HEK293 (cell line): ENCODE measurements at regions of chr7 and their contacts with region 1.

Region 1: GRCh38 chr7:39580149-39580874 is 14.1 kb downstream of the YAE1 start:
- H3K4me3 ChIP-seq: no peak overlapping the region
- H3K27ac ChIP-seq: no peak overlapping the region
- H3K4me1 ChIP-seq: peaks cover 3% of the 10 kb centered on the region; the same call in 1 of the 2 replicates
- CTCF ChIP-seq: peak; percentile 62

Region 2: GRCh38 chr7:39566023-39566921 is 14.0 kb before region 1 on chr7 and contains the start of gene YAE1:
- CTCF ChIA-PET with region 1: interaction called, 12 read pairs
- POLR2A ChIA-PET with region 1: interaction called, 5 read pairs
- H3K4me3 ChIP-seq: peak within 1 kb of the TSS; percentile 100
- H3K27ac ChIP-seq: peak within 1 kb of the TSS; percentile 83
- H3K4me1 ChIP-seq: no peaks in the 10 kb centered on the region
- CTCF ChIP-seq: no peak

Region 3: DNA sequence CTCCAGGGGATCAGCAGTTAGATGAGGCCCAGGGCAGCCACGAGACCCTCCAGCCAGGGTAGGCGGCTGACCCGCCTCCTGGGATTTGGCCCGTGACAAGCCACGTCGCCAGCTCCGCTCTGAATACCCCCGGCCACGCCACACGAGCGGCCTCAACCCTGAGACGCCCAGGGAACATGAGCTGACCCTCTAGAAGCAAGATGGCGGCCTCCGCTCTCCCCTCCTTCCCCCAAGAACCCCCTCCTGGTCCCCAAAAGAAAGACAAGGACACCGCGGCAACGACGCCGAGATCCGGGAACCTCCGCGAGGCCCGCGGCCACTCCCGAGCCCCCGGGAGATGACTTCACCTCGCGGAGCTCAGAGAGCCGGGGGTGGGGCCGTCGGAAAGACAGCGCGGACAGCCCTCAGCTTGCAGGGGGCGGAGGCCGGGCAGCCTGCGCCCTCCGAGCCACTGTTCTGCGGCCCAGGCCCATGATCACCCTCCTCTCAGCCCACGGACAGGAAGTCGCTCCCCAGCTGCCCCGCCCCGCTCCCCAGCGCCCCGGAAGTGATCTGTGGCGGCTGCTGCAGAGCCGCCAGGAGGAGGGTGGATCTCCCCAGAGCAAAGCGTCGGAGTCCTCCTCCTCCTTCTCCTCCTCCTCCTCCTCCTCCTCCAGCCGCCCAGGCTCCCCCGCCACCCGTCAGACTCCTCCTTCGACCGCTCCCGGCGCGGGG is 42.9 kb after region 1 on chr7 and contains the start of gene RALA:
- CTCF ChIA-PET with region 1: interaction called, 9 read pairs
- POLR2A ChIA-PET with region 1: interaction called, 12 read pairs
- H3K4me3 ChIP-seq: peak within 1 kb of the TSS; percentile 86
- H3K27ac ChIP-seq: peak within 1 kb of the TSS; percentile 78
- H3K4me1 ChIP-seq: peaks cover 21% of the 10 kb centered on the region
- CTCF ChIP-seq: no peak

Region 4: DNA sequence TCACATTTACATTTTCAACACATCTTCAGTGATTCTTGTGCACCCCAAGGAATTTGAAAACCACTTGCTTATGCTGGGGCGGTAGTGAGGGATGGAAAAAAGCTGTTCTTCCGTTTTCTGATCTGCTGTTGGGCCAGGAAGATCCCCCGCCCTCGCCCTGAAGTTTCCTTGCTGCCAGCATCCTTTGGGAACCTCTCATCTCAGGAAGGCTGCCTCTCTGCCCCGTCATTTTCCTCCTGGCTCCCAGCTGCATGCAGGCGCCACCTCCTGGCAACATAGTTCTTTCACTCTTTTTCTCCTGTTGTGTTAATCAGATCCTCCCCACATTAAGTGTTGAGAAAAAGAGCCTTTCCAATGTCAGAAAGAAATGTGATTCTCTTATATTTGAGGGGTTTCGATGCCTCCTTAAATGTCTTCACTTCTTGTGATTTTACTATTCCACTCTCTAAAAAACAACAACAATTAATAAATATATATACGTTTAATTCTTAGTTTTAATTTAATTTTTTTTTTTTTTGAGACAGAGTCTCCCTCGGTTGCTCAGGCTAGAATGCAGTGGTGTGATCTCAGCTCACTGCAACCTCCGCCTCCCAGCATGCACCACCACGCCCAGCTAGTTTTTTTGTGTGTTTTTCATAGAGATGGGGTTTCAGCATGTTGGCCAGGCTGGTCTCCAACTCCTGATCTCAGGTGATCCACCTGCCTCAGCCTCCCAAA is 165.9 kb after region 1 on chr7:
- CTCF ChIA-PET with region 1: interaction called, 257 read pairs
- POLR2A ChIA-PET with region 1: interaction called, 5 read pairs
- H3K4me3 ChIP-seq: no peak overlapping the region
- H3K27ac ChIP-seq: no peak overlapping the region
- H3K4me1 ChIP-seq: no peaks in the 10 kb centered on the region
- CTCF ChIP-seq: peak; percentile 62; the same call in 1 of the 2 replicates

Region 5: GRCh38 chr7:39894904-39895303 is 314.6 kb after region 1 on chr7:
- CTCF ChIA-PET with region 1: interaction called, 10 read pairs
- POLR2A ChIA-PET with region 1: no interaction called
- H3K4me3 ChIP-seq: no peak overlapping the region
- H3K27ac ChIP-seq: no peak overlapping the region
- H3K4me1 ChIP-seq: peaks cover 3% of the 10 kb centered on the region; the same call in 1 of the 2 replicates
- CTCF ChIP-seq: no peak

Region 6: GRCh38 chr7:40057292-40057691 is 477.0 kb after region 1 on chr7:
- CTCF ChIA-PET with region 1: interaction called, 26 read pairs
- POLR2A ChIA-PET with region 1: no interaction called
- H3K4me3 ChIP-seq: no peak overlapping the region
- H3K27ac ChIP-seq: no peak overlapping the region
- H3K4me1 ChIP-seq: peaks cover 3% of the 10 kb centered on the region; the same call in 1 of the 2 replicates
- CTCF ChIP-seq: no peak